ENCODE measurements at regions of chr16 and their contacts with region 1.

Region 1: DNA sequence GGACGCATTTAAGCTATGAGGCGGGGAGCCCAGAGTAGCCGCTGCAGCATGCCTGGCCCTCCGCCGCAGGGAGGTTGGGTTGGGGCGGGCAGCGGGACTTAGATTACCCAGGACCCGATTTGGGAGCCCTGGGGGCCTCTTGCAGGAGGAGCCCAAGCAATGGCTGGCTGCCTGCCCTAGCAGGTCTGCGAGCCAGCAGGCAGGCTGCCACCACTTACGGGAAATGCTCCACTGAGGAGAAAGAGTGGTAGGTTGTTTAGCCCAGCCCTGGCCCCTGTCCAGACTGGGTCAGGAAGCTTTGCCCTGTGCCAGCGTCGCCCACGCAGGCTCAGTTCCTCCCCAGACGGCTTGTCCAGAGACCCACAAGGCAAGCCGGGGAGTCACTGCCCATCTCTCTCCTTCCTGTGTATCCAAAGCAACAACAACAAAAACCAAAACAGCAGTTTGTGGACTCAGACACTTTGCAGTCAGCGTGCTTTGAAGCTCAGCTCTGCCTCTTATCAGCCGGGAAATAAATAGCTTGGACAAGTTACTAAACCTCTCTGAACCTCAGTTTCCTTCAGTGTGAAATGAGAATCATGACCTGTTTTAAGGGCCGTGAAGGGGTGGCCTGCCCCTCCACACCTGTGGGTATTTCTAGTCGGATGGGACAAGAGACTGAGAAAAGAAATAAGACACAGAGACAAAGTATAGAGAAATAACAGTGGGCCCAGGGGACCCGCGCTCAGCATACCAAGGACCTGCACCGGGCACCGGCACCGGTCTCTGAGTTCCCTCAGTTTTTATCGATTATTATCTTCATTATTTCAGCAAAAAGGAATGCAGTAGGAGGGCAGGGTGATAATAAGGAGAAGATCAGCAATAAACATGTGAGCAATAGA is 10.5 kb upstream of the TVP23A start:
- DNase-seq: peak; percentile 48 to 78
- ATAC-seq: peak; percentile 58 to 65
- H3K4me3 ChIP-seq: peak overlapping the region in 3 of 4 donors; percentile 7 to 32 (median 23)
- H3K27ac ChIP-seq: peak overlapping the region; percentile 72 to 82 (median 76)
- H3K4me1 ChIP-seq: peaks cover 17 to 24% of the 10 kb centered on the region in 2 donors
- H3K27me3 ChIP-seq: no peaks in the 10 kb centered on the region
- CTCF ChIP-seq: no peak
- POLR2A ChIP-seq: peak in 1 of 2 donors; percentile 18

Region 2: DNA sequence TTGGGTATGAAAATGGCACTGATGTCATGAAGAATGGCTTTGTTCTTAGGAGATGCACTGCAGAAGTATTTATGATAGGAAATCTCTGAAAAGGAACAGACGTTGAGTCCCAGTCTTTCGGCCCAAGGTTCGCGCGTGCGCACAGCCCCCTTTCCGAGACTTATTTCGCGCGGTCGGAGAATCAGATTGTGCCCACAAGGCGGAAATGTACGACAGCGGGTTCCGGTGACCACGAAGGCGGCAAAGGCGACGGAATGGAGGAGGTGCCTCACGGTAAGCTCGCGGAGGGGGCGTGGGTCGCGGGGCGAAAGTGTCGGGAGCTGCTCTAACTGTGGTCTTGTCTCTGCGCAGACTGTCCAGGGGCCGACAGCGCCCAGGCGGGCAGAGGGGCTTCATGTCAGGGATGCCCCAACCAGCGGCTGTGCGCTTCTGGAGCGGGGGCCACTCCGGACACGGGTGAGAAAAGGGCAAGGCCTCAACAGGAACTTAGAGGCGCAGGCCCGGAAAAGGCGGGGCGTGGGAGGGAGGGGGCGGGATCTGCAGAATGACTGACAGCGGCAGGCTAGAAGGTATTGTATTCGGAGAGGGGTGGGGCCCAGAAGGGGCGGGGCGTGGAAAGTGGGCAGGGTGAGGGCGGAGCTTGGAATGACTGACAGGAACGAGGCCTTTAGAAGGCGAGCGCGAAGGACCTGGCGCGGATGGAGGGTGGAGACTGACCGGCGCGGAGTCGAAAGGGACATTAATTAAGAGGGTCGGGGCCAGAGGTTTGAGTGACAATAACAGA is 85.3 kb before region 1 on chr16 and contains the start of gene NUBP1:
- in situ Hi-C with region 1: no loop called
- intact Hi-C with region 1: loop called (anchors 5 kb)
- DNase-seq: peak; percentile 98 to 100
- ATAC-seq: peak; percentile 96 to 97
- H3K4me3 ChIP-seq: peak within 1 kb of the TSS; percentile 64 to 76 (median 71)
- H3K27ac ChIP-seq: peak within 1 kb of the TSS; percentile 94 to 98 (median 96)
- H3K4me1 ChIP-seq: peaks cover 23 to 26% of the 10 kb centered on the region in 2 donors
- H3K27me3 ChIP-seq: no peaks in the 10 kb centered on the region
- CTCF ChIP-seq: no peak
- POLR2A ChIP-seq: peak; percentile 76 to 90
- total RNA-seq, gene NUBP1: 19.2 to 38.5 (median 26.9) TPM

Region 3: GRCh38 chr16:12375046-12375740 is 1546.1 kb after region 1 on chr16:
- in situ Hi-C with region 1: no loop called
- intact Hi-C with region 1: no loop called
- DNase-seq: no peak
- ATAC-seq: no peak
- H3K4me3 ChIP-seq: no peak overlapping the region
- H3K27ac ChIP-seq: no peak overlapping the region
- H3K4me1 ChIP-seq: no peaks in the 10 kb centered on the region
- H3K27me3 ChIP-seq: no peaks in the 10 kb centered on the region
- CTCF ChIP-seq: no peak
- POLR2A ChIP-seq: no peak